ENCODE measurements at regions of chr2 and their contacts with region 1.

Region 1: DNA sequence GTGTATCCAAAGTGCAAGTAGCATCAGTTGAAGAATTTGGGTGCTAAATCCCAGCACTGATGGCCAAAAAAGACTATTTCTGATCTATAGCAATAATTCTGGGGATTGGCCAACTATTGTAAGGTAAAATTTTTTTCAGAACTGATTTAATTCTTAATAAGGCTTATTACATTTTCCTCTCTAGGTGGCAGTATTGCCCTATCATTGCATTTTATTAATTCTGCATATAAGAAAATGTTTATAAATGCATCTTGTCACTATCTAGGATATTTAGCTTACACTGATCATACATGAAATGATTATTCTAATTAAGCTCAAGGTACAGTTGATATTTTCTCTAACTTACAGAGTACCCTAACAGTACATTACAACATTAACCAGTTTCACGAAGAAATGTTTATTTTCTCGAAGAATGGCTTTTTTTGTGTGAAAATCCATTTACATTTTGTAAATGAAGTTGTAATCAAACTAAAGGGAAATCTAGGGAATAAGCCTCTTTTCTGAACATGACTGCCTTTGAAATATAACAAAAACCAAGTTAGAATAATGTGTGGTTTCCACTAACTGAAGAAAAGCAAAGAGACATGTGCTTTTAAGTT is 11.0 kb downstream of the TTN start:
- DNase-seq: no peak
- ATAC-seq: peak in 3 of 4 donors; percentile 52 to 63 (median 61)
- H3K4me3 ChIP-seq: no peak overlapping the region
- H3K27ac ChIP-seq: no peak overlapping the region
- H3K4me1 ChIP-seq: no peaks in the 10 kb centered on the region
- H3K27me3 ChIP-seq: no peaks in the 10 kb centered on the region
- CTCF ChIP-seq: peak; percentile 15 to 50 (median 38)

Region 2: DNA sequence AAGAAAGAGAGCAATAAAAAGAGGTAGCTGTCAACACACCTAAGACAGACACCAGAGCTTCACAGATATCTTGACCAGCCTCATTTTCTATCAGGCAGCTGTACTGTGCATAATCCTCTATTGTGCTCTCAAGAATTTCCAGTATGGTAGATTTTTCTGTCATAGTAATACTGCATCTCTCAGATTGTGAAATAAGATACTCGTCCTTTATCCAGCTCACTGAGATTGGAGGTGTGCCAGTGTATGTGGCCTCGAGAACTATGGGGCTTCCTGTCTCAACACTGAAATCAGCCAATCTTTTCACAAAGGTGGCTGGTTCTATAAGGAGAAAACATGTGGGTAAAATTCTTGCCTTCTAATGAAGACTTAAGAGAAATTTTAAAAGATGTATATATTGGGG is 77.9 kb before region 1 on chr2:
- intact Hi-C with region 1: no loop called
- DNase-seq: no peak
- ATAC-seq: no peak
- H3K4me3 ChIP-seq: no peak overlapping the region
- H3K27ac ChIP-seq: no peak overlapping the region
- H3K4me1 ChIP-seq: no peaks in the 10 kb centered on the region
- H3K27me3 ChIP-seq: no peaks in the 10 kb centered on the region
- CTCF ChIP-seq: no peak

Region 3: GRCh38 chr2:178908810-178909209 is 112.6 kb after region 1 on chr2:
- intact Hi-C with region 1: loop called in 1 of 3 experiments (anchors 5 kb)
- DNase-seq: no peak
- ATAC-seq: no peak
- H3K4me3 ChIP-seq: no peak overlapping the region
- H3K27ac ChIP-seq: no peak overlapping the region
- H3K4me1 ChIP-seq: peaks cover 18 to 19% (median 18%) of the 10 kb centered on the region in 3 donors
- H3K27me3 ChIP-seq: no peaks in the 10 kb centered on the region
- CTCF ChIP-seq: no peak

Region 4: GRCh38 chr2:178917555-178917954 is 121.4 kb after region 1 on chr2:
- intact Hi-C with region 1: loop called in 1 of 3 experiments (anchors 5 kb)
- DNase-seq: no peak
- ATAC-seq: no peak
- H3K4me3 ChIP-seq: no peak overlapping the region
- H3K27ac ChIP-seq: no peak overlapping the region
- H3K4me1 ChIP-seq: peaks cover 0 to 4% (median 0%) of the 10 kb centered on the region in 3 donors
- H3K27me3 ChIP-seq: no peaks in the 10 kb centered on the region
- CTCF ChIP-seq: no peak

Region 5: DNA sequence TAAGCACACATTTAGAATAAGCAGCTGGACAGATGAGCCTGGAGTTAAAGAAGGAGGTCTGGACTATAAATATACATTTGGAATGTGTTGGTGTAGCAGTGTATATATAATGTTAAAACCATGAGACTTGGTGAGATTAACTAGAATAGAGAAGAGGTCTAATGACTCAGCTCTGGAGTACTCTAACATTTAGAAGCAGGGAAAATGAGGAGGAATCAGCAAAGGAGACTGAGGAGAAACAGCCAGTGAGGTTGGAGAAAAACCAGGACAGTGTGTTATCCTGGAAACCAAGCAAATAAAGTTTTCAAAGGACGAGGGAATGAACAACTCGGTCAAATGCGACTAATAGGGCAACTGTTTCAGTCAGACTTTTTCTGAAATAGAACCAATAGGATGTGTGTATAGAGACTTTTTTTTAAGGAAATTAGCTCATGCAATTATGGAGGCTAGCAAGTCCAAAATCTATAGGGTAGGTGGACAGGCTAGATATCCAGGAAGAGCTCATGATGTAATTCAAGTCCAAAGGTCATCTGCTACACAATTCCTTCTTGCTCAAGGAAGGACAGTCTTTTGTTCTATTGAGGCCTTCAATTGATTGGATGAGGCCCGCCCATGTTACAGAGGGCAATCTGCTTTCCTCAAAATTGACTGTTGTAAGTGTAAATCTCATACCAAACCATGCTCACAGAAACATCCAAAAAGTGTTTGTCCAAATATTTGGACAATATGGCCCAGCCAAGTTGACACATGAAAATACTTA is 479.3 kb after region 1 on chr2:
- intact Hi-C with region 1: no loop called
- DNase-seq: no peak
- ATAC-seq: peak in 1 of 4 donors; percentile 15
- H3K4me3 ChIP-seq: no peak overlapping the region
- H3K27ac ChIP-seq: no peak overlapping the region
- H3K4me1 ChIP-seq: peaks cover 0 to 9% (median 0%) of the 10 kb centered on the region in 3 donors
- H3K27me3 ChIP-seq: no peaks in the 10 kb centered on the region
- CTCF ChIP-seq: no peak